Natural killer cell (primary cell): ENCODE measurements at regions of chrX and their contacts with region 1.

Region 1: GRCh38 chrX:41781502-41781901 is 57.5 kb downstream of the GPR82 start:
- DNase-seq: peak in 1 of 2 donors; percentile 64
- ATAC-seq: peak in 2 of 3 donors; percentile 38 to 64
- H3K4me3 ChIP-seq: no peak overlapping the region
- H3K4me3 Mint-ChIP-seq: no peak overlapping the region
- H3K27ac ChIP-seq: no peak overlapping the region
- H3K27ac Mint-ChIP-seq: no peak overlapping the region
- H3K4me1 ChIP-seq: no peaks in the 10 kb centered on the region
- H3K4me1 Mint-ChIP-seq: no peaks in the 10 kb centered on the region
- H3K27me3 ChIP-seq: no peaks in the 10 kb centered on the region
- H3K27me3 Mint-ChIP-seq: no peaks in the 10 kb centered on the region
- CTCF ChIP-seq: peak; percentile 56

Region 2: GRCh38 chrX:41384041-41384705 is 397.3 kb before region 1 on chrX:
- intact Hi-C with region 1: no loop called
- DNase-seq: peak in 1 of 2 donors; percentile 80
- ATAC-seq: peak in 2 of 3 donors; percentile 46
- H3K4me3 ChIP-seq: no peak overlapping the region
- H3K4me3 Mint-ChIP-seq: no peak overlapping the region
- H3K27ac ChIP-seq: no peak overlapping the region
- H3K27ac Mint-ChIP-seq: no peak overlapping the region
- H3K4me1 ChIP-seq: peaks cover 3% of the 10 kb centered on the region
- H3K4me1 Mint-ChIP-seq: peaks cover 0 to 7% of the 10 kb centered on the region in 2 donors
- H3K27me3 ChIP-seq: no peaks in the 10 kb centered on the region
- H3K27me3 Mint-ChIP-seq: no peaks in the 10 kb centered on the region
- CTCF ChIP-seq: no peak

Region 3: GRCh38 chrX:41655631-41656030 is 125.9 kb before region 1 on chrX:
- intact Hi-C with region 1: no loop called
- DNase-seq: no peak
- ATAC-seq: no peak
- H3K4me3 ChIP-seq: no peak overlapping the region
- H3K4me3 Mint-ChIP-seq: no peak overlapping the region
- H3K27ac ChIP-seq: no peak overlapping the region
- H3K27ac Mint-ChIP-seq: no peak overlapping the region
- H3K4me1 ChIP-seq: no peaks in the 10 kb centered on the region
- H3K4me1 Mint-ChIP-seq: peaks cover under 1 to 8% of the 10 kb centered on the region in 2 donors
- H3K27me3 ChIP-seq: no peaks in the 10 kb centered on the region
- H3K27me3 Mint-ChIP-seq: peaks cover 0 to 19% of the 10 kb centered on the region in 2 donors
- CTCF ChIP-seq: no peak

Region 4: GRCh38 chrX:41923257-41923969 is 141.9 kb after region 1 on chrX and contains the start of gene CASK:
- intact Hi-C with region 1: no loop called
- DNase-seq: peak; percentile 65 to 94
- ATAC-seq: peak; percentile 76 to 89 (median 80)
- H3K4me3 ChIP-seq: peak within 1 kb of the TSS; percentile 69
- H3K4me3 Mint-ChIP-seq: peak within 1 kb of the TSS; percentile 88
- H3K27ac ChIP-seq: peak within 1 kb of the TSS; percentile 49
- H3K27ac Mint-ChIP-seq: peak within 1 kb of the TSS; percentile 58 to 83
- H3K4me1 ChIP-seq: peaks cover 10% of the 10 kb centered on the region
- H3K4me1 Mint-ChIP-seq: peaks cover 15 to 21% of the 10 kb centered on the region in 2 donors
- H3K27me3 ChIP-seq: no peaks in the 10 kb centered on the region
- H3K27me3 Mint-ChIP-seq: peaks cover 0 to 9% of the 10 kb centered on the region in 2 donors
- CTCF ChIP-seq: no peak
- total RNA-seq, gene CASK: 23.5 to 27.9 (median 25.6) TPM

Region 5: GRCh38 chrX:43750248-43750676 is 1968.8 kb after region 1 on chrX:
- intact Hi-C with region 1: loop called (anchors 1 kb)
- DNase-seq: peak in 1 of 2 donors; percentile 68
- ATAC-seq: peak; percentile 53 to 83 (median 59)
- H3K4me3 ChIP-seq: no peak overlapping the region
- H3K4me3 Mint-ChIP-seq: no peak overlapping the region
- H3K27ac ChIP-seq: no peak overlapping the region
- H3K27ac Mint-ChIP-seq: no peak overlapping the region
- H3K4me1 ChIP-seq: no peaks in the 10 kb centered on the region
- H3K4me1 Mint-ChIP-seq: peaks cover 0 to 5% of the 10 kb centered on the region in 2 donors
- H3K27me3 ChIP-seq: no peaks in the 10 kb centered on the region
- H3K27me3 Mint-ChIP-seq: peaks cover 0 to 11% of the 10 kb centered on the region in 2 donors
- CTCF ChIP-seq: peak; percentile 37